Gastrocnemius medialis (tissue), 4 donors: ENCODE measurements at regions of chr11 and their contacts with region 1.

Region 1: DNA sequence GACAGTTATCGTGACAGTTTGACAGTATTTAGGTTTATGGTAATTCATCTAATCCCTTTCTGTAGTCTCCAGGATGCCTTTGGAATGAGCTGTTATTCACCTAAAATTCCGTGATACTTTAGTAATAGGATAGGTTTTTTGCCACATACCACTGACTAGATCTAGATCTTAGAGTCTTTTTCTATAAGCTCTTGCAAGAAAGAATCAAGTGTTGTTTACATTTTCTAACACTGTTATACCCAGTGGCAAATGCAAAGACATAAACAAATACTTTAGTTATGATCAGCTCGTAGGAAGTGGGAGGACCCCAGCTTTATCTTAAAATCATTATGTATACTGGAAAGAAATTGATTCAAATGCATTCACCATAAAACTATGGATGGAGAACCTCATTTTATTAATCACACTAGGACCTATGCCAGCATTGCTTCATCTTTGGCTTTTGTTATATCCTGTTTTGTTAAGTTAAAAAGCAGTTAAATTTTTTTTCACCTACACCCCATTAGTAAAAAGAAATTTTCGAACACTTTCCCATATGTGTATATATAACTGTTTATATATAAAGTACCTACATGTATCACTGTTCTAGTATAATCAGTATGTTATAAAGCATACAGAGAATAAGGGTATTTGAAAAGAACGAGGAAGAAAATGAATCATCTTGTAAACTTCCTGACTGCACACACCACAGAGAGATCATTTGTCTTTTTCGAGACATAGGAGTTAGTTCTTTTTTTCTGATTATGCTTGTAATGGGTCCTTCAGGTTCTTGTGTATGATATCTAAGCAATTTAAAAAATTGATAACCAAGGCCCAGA is 60.9 kb downstream of the PDHX start:
- DNase-seq: no peak
- ATAC-seq: no peak
- H3K4me3 ChIP-seq: no peak overlapping the region
- H3K27ac ChIP-seq: no peak overlapping the region
- H3K4me1 ChIP-seq: peaks cover 3 to 4% of the 10 kb centered on the region in 2 donors
- H3K27me3 ChIP-seq: no peaks in the 10 kb centered on the region
- CTCF ChIP-seq: no peak
- POLR2A ChIP-seq: no peak

Region 2: DNA sequence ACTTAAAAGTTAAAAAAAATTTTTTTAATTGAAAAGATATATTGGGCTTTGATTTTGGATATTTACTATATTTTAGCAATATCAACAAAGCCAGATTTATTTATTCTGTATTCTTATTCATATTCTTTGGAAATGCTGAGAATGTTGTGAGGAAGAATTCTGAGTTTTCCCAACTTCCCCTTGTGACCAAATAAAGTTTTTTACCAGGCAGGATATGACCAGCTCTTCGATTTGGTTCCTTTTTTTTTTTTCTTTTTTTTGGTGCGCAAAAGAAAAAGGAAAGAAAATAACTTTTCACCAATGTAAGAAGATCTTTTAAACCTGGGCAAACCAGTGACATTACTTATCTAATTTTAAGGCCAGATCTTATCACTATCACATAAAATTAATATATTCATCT is 1925.1 kb before region 1 on chr11:
- in situ Hi-C with region 1: no loop called
- intact Hi-C with region 1: loop called (anchors 10 kb)
- DNase-seq: no peak
- ATAC-seq: no peak
- H3K4me3 ChIP-seq: no peak overlapping the region
- H3K27ac ChIP-seq: no peak overlapping the region
- H3K4me1 ChIP-seq: no peaks in the 10 kb centered on the region
- H3K27me3 ChIP-seq: no peaks in the 10 kb centered on the region
- CTCF ChIP-seq: no peak
- POLR2A ChIP-seq: no peak

Region 3: GRCh38 chr11:35182317-35182939 is 205.1 kb after region 1 on chr11:
- in situ Hi-C with region 1: no loop called
- intact Hi-C with region 1: no loop called
- DNase-seq: no peak
- ATAC-seq: no peak
- H3K4me3 ChIP-seq: no peak overlapping the region
- H3K27ac ChIP-seq: no peak overlapping the region
- H3K4me1 ChIP-seq: peaks cover 0 to 8% of the 10 kb centered on the region in 2 donors
- H3K27me3 ChIP-seq: no peaks in the 10 kb centered on the region
- CTCF ChIP-seq: no peak
- POLR2A ChIP-seq: no peak